ENCODE measurements at regions of chr2 and their contacts with region 1.

Region 1: DNA sequence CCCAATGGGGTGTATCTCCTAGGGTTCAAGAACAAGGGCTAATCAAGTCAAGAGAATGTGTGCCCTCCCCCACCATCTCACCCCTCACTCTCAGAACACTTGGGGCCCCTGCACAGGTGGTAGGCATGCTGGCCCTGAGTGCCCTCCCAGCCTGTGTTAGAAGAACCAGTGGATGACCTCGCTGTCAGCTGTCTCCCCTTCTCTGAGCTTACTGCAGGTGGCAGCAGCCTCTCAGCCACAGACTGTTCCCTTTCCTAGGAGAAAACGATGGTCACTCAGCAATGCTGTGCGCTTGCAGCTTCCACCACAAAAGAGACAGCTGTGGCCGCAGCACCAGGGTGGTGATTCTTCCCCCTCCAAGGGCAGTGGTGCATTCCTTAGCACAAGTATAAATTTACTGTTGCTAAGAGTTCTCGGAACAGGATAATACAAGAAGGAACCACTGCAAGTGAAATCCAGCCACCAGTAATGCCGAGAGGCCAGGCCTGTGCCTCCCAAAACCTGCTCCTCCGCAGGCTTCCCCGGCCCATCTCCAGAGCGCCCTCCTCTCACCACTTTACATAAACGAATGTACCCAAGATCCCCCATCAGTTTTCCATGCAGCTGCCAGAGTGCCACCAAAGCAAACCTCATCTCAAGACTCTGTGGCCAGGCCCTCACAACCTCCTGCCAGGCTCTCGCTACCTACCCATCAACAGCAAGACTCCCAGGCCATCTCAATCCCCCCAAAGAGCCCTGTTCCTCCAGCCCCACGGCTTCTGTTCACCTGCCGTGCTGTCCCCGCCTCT is 935 bp upstream of the RAMP1 start:
- DNase-seq: peak; percentile 66 to 89 (median 74)
- H3K4me3 ChIP-seq: no peak overlapping the region
- H3K27ac ChIP-seq: peak overlapping the region in 1 of 5 donors; percentile 76
- H3K4me1 ChIP-seq: peaks cover 0 to 7% of the 10 kb centered on the region in 2 donors
- H3K27me3 ChIP-seq: peaks cover 4% of the 10 kb centered on the region
- CTCF ChIP-seq: peak; percentile 32 to 87 (median 72)
- POLR2A ChIP-seq: no peak

Region 2: GRCh38 chr2:236904389-236905280 is 953.9 kb before region 1 on chr2:
- intact Hi-C with region 1: no loop called
- DNase-seq: no peak
- H3K4me3 ChIP-seq: no peak overlapping the region
- H3K27ac ChIP-seq: no peak overlapping the region
- H3K4me1 ChIP-seq: no peaks in the 10 kb centered on the region
- H3K27me3 ChIP-seq: no peaks in the 10 kb centered on the region
- CTCF ChIP-seq: no peak
- POLR2A ChIP-seq: no peak

Region 3: GRCh38 chr2:237614151-237614720 is 244.3 kb before region 1 on chr2:
- intact Hi-C with region 1: no loop called
- DNase-seq: peak in 1 of 7 donors; percentile 53
- H3K4me3 ChIP-seq: no peak overlapping the region
- H3K27ac ChIP-seq: no peak overlapping the region
- H3K4me1 ChIP-seq: peaks cover 18 to 22% of the 10 kb centered on the region in 2 donors
- H3K27me3 ChIP-seq: no peaks in the 10 kb centered on the region
- CTCF ChIP-seq: no peak
- POLR2A ChIP-seq: no peak

Region 4: GRCh38 chr2:238256594-238257104 is 398.2 kb after region 1 on chr2:
- intact Hi-C with region 1: loop called (anchors 5 to 10 kb)
- DNase-seq: peak; percentile 83 to 96 (median 94)
- H3K4me3 ChIP-seq: no peak overlapping the region
- H3K27ac ChIP-seq: no peak overlapping the region
- H3K4me1 ChIP-seq: no peaks in the 10 kb centered on the region
- H3K27me3 ChIP-seq: no peaks in the 10 kb centered on the region
- CTCF ChIP-seq: peak; percentile 85 to 94 (median 89)
- POLR2A ChIP-seq: no peak

Region 5: GRCh38 chr2:238263204-238264071 is 404.9 kb after region 1 on chr2:
- intact Hi-C with region 1: loop called (anchors 5 to 10 kb)
- DNase-seq: peak; percentile 90 to 98 (median 95)
- H3K4me3 ChIP-seq: no peak overlapping the region
- H3K27ac ChIP-seq: peak overlapping the region in 2 of 5 donors; percentile 43 to 61
- H3K4me1 ChIP-seq: peaks cover 0 to 12% of the 10 kb centered on the region in 2 donors
- H3K27me3 ChIP-seq: no peaks in the 10 kb centered on the region
- CTCF ChIP-seq: peak; percentile 77 to 94 (median 86)
- POLR2A ChIP-seq: no peak